Transverse colon (tissue), 4 donors: ENCODE measurements at regions of chr3 and their contacts with region 1.

Region 1: DNA sequence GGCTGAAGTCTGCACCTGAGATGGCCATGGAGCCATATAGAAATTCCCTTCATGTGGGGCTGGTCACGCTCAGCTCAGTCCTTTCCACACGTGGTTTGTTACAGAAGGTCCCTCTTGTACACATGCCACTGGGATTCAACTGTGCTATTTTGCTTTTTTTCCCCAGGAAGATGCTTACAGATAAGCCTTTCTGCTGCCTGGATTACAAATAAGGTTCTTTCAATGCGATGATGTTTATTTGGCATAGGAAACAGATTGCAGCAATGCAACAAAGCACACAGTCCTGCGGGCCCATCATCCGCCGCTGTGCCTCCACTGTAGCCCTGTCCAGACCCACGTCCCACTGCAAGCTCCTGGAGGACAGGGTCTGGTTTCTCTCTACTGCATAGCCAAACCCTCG is 124.8 kb downstream of the XXYLT1 start:
- DNase-seq: no peak
- H3K4me3 ChIP-seq: no peak overlapping the region
- H3K27ac ChIP-seq: peak overlapping the region in 1 of 4 donors; percentile 38
- H3K4me1 ChIP-seq: peaks cover 0 to 34% (median 8%) of the 10 kb centered on the region in 4 donors
- H3K27me3 ChIP-seq: no peaks in the 10 kb centered on the region
- CTCF ChIP-seq: no peak
- EP300 ChIP-seq: no peak
- POLR2A ChIP-seq: no peak

Region 2: DNA sequence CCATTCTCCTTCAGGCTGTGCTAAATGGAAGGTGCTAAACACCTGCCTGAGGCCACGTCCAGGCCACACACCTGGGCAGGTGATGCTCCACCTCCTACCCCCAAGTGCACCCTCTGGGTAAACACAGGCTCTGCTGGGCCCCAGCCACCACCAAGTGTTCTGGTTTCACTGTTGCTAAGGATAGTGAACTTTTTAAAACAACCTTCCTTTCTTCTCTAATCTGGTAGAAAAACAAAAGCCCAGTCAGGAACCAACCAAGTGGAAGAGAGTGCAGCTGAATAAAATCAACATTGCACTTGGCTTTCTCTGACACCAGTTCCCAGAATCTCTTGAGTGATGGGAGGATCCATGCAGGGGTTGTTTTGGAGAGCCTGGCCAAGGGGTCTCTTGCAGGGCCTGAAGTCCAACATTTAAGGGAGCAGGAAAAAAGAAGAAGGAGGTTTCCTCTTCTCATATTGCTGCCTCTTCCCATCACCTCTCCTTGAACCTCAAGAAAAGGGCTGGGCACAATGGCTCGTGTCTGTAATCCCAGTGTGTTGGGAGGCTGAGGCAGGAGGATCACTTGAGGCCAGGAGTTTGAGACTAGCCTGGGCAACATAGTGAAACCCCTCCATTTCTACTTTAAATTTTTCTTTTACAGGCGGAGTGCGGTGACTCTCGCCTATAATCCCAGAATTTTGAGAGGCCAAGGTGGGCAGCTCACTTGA is 633.1 kb before region 1 on chr3:
- in situ Hi-C with region 1: no loop called
- intact Hi-C with region 1: no loop called
- DNase-seq: no peak
- H3K4me3 ChIP-seq: no peak overlapping the region
- H3K27ac ChIP-seq: no peak overlapping the region
- H3K4me1 ChIP-seq: peaks cover 0 to 8% (median 2%) of the 10 kb centered on the region in 4 donors
- H3K27me3 ChIP-seq: no peaks in the 10 kb centered on the region
- CTCF ChIP-seq: no peak
- EP300 ChIP-seq: no peak
- POLR2A ChIP-seq: no peak

Region 3: GRCh38 chr3:194740859-194741491 is 405.2 kb before region 1 on chr3:
- in situ Hi-C with region 1: no loop called
- intact Hi-C with region 1: no loop called
- DNase-seq: no peak
- H3K4me3 ChIP-seq: no peak overlapping the region
- H3K27ac ChIP-seq: no peak overlapping the region
- H3K4me1 ChIP-seq: peaks cover 0 to 14% (median 0%) of the 10 kb centered on the region in 4 donors
- H3K27me3 ChIP-seq: peaks cover 3% of the 10 kb centered on the region
- CTCF ChIP-seq: no peak
- EP300 ChIP-seq: no peak
- POLR2A ChIP-seq: no peak

Region 4: DNA sequence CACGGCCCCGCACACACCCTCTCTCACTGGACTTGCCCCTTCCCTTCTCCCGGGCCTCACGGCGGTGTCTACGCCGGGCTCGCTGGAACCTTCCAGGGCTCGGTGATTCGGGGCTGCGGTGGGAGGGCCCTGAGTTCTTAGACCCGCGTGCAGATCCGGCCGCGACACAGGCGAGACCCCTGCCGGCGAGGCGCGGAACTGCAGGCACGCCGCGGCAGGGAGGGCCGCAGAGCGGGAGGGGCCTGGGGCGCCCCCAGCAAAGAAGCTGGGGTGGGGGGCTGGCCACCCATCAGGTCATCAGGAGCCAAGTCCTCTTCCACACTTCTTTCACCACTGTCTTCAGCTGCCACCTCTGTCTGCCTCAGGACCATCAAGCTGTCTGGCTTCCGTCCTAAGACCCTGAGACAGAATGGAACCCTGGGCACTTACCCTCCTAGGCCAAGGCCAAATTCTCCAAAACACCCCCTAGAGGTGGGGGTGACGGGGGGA is 39.7 kb before region 1 on chr3:
- in situ Hi-C with region 1: no loop called
- intact Hi-C with region 1: loop called (anchors 1 kb)
- DNase-seq: peak; percentile 65
- H3K4me3 ChIP-seq: peak overlapping the region in 1 of 4 donors; percentile 29
- H3K27ac ChIP-seq: no peak overlapping the region
- H3K4me1 ChIP-seq: peaks cover 0 to 28% (median 9%) of the 10 kb centered on the region in 4 donors
- H3K27me3 ChIP-seq: no peaks in the 10 kb centered on the region
- CTCF ChIP-seq: peak; percentile 97 to 100 (median 100)
- EP300 ChIP-seq: no peak
- POLR2A ChIP-seq: no peak